ENCODE measurements at regions of chr3 and their contacts with region 1.

Region 1: DNA sequence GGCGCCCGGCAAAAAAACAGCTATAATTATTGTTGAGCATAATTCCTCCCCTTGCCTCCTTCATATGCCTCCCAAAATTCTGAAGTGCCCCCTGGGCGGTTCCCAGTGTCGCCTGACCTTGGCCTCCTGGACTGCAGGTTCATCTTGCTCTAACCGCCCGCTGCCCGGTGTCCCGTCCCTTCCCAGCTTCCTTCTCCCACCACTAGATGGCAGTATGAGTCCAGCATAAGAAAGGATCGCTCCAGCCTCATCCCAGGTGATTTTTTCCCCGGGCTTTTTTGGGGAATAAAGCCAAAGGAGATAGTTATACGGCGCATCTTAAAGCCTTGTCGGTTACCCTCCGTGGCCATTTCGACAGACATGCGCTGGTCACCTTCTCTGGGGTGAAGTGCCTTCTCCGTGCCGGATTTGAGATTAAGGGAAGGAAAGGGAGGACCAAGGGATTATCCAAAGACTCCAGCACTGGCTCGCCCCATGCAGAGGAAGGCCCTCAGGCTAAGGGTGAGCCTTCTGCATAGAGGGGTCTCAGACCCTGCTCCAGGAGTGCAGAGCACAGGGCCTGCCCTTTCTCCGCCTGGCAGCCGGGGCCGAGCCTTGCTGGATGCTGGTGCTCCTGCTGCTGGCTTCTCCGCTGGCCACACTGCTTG is 45.8 kb upstream of the TRA2B start:
- DNase-seq: peak; percentile 62
- ATAC-seq: peak; percentile 93
- H3K4me3 ChIP-seq: no peak overlapping the region
- H3K27ac ChIP-seq: no peak overlapping the region
- H3K4me1 ChIP-seq: 0 out of 2 replicates have a peak, but pooled peaks cover 2% of the 10 kb centered on the region
- H3K27me3 ChIP-seq: no peaks in the 10 kb centered on the region; the same call in 1 of the 2 replicates
- CTCF ChIP-seq: peak; percentile 91
- POLR2A ChIP-seq: no peak
- RAD21 ChIP-seq: peak; percentile 97

Region 2: DNA sequence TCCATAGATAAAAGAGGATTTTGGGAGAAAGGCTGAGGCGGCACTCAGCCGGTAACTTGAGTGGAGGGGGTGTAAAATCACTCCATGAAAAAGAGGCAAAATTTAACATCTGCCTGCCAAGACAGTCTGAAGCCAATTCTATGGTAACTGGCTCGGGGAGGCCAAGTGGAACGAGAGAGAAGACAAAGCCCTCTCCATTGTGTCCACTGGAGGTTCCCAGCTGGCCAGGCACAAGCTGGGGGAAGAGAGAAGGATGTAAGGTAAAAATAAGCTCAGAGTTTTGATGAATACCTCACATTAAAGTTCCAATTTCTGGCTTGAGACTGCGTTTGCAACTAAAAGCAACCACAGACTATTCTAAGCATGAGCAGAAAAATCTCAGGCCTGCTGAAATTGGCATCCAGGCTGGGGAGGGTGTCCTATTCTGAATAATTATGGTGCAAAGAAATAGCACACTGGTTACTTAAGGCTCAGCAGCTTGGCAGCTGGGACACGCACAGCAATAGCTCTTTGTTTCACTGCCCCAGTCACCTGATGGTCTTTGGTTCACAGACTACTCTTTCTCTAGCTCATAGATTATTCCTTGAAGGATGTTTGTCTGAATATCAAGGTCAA is 1555.0 kb before region 1 on chr3:
- CTCF ChIA-PET with region 1: no interaction called
- POLR2A ChIA-PET with region 1: no interaction called
- dilution Hi-C with region 1: no loop called
- in situ Hi-C with region 1: no loop called
- intact Hi-C with region 1: no loop called
- DNase-seq: no peak
- ATAC-seq: no peak
- H3K4me3 ChIP-seq: no peak overlapping the region
- H3K27ac ChIP-seq: no peak overlapping the region
- H3K4me1 ChIP-seq: no peaks in the 10 kb centered on the region
- H3K27me3 ChIP-seq: peaks cover 16% of the 10 kb centered on the region
- CTCF ChIP-seq: no peak
- POLR2A ChIP-seq: no peak
- RAD21 ChIP-seq: no peak

Region 3: DNA sequence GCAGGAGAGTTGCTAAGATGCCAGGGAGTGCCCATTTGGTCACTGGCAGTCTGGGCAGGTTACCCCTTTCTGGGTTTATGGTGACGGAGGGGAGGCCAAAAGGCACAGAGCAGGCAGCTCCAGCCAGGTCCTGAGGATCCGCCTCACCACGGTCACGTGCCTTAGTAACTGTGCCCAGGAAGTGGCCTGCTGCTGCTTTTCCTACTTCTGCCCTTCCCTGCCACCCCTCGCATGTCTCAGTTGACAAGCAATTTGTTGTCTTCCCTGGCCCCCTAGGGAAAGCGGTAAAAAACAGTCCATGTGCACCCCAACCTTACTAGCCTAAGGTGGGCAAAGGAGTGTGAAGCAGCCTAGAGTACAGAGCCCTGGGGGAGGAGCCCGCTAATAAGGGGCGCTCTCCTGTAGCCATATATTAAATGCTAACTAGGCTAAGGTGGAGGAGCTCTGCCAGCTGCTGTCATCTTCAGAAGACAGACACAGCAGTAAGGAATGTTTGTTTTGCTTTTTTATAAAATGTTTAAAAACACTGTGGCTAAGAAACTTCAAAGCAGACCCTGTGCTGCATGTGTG is 422.2 kb before region 1 on chr3:
- CTCF ChIA-PET with region 1: no interaction called
- POLR2A ChIA-PET with region 1: no interaction called
- dilution Hi-C with region 1: no loop called
- in situ Hi-C with region 1: no loop called
- intact Hi-C with region 1: no loop called
- DNase-seq: no peak
- ATAC-seq: no peak
- H3K4me3 ChIP-seq: no peak overlapping the region
- H3K27ac ChIP-seq: no peak overlapping the region
- H3K4me1 ChIP-seq: no peaks in the 10 kb centered on the region
- H3K27me3 ChIP-seq: peaks cover 12% of the 10 kb centered on the region
- CTCF ChIP-seq: no peak
- POLR2A ChIP-seq: no peak
- RAD21 ChIP-seq: no peak

Region 4: DNA sequence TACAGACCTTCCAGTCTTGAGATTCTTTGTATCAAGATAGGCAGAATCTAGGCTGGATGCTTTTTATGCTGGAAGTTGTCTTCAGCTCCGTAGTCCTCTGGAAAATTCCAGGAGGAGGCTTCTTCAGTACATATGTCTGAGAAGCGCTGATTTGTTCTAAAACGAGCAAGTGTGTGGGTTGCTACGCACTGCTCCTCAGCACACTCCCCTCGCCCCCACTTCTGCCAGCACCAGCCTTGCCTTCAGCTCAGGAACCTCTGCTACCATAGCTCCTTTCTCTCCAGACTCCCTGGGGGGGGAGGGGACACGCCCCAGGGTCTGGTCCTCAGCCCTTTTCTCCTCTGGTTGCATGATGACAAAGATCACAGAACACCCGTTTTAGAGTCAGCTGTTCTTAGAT is 29.7 kb after region 1 on chr3:
- CTCF ChIA-PET with region 1: no interaction called
- POLR2A ChIA-PET with region 1: no interaction called
- dilution Hi-C with region 1: no loop called
- in situ Hi-C with region 1: no loop called
- intact Hi-C with region 1: no loop called
- DNase-seq: no peak
- ATAC-seq: no peak
- H3K4me3 ChIP-seq: no peak overlapping the region
- H3K27ac ChIP-seq: no peak overlapping the region
- H3K4me1 ChIP-seq: no peaks in the 10 kb centered on the region
- H3K27me3 ChIP-seq: peaks cover 6% of the 10 kb centered on the region; the same call in 1 of the 2 replicates
- CTCF ChIP-seq: no peak
- POLR2A ChIP-seq: no peak
- RAD21 ChIP-seq: no peak

Region 5: GRCh38 chr3:186057594-186057993 is 74.0 kb after region 1 on chr3:
- CTCF ChIA-PET with region 1: no interaction called
- POLR2A ChIA-PET with region 1: no interaction called
- dilution Hi-C with region 1: no loop called
- in situ Hi-C with region 1: no loop called
- intact Hi-C with region 1: loop called (anchors 5 kb)
- DNase-seq: peak; percentile 97
- ATAC-seq: peak; percentile 92
- H3K4me3 ChIP-seq: no peak overlapping the region
- H3K27ac ChIP-seq: peak overlapping the region; percentile 21; the same call in 1 of the 2 replicates
- H3K4me1 ChIP-seq: peaks cover 8% of the 10 kb centered on the region; the same call in 1 of the 2 replicates
- H3K27me3 ChIP-seq: no peaks in the 10 kb centered on the region
- CTCF ChIP-seq: no peak
- POLR2A ChIP-seq: no peak
- RAD21 ChIP-seq: peak; percentile 16; the same call in 1 of the 2 replicates

Region 6: DNA sequence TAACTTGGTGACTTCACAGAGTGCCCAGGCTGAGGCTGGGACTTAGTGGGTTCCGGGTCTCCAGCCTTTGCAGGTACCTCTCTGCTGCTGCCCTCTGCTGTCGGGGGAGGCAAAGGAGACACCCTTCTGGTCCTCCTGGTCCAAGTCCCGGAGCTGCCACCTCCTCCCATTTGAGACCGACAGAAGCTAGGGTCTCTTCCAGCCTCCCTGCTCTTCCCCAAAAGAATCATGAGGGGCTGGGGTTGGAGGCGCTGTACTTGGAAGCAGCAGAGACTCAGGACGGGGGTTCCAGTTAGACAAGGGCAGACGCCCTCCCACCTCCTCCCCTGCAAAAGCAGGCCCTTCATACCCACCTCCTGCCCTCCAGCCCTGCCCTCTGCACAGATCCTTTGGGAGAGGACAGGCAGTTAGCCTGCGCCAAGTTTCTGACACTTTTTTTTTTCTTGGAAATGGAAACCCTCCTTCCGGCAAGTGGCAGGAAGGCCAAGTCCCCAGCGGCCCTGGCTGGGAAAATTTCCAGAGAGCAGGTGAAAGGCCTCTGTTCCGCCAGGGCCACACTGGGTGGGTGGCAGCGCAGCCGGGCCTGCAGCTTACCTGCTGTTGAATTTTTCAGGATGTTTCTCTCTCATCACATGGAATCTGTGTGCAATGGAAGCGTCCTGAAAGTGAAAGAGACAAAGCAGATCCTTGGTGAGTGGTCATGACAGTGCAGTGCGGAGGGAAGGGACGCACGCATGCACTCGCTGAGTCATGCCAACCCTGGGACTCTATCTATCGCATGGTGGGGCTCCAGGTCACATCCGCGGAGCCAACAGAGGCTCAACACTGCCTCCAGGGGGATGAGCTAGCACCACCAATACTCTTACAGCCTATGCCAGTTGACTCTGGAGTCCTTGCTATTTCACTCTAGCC is 258.5 kb after region 1 on chr3:
- CTCF ChIA-PET with region 1: interaction called, 3 read pairs
- POLR2A ChIA-PET with region 1: no interaction called
- dilution Hi-C with region 1: no loop called
- in situ Hi-C with region 1: no loop called
- intact Hi-C with region 1: loop called (anchors 1 kb)
- DNase-seq: peak; percentile 82
- ATAC-seq: peak; percentile 96
- H3K4me3 ChIP-seq: no peak overlapping the region
- H3K27ac ChIP-seq: no peak overlapping the region
- H3K4me1 ChIP-seq: 0 out of 2 replicates have a peak, but pooled peaks cover 2% of the 10 kb centered on the region
- H3K27me3 ChIP-seq: peaks cover 2% of the 10 kb centered on the region; the same call in 1 of the 2 replicates
- CTCF ChIP-seq: peak; percentile 61
- POLR2A ChIP-seq: no peak
- RAD21 ChIP-seq: peak; percentile 73

Region 7: DNA sequence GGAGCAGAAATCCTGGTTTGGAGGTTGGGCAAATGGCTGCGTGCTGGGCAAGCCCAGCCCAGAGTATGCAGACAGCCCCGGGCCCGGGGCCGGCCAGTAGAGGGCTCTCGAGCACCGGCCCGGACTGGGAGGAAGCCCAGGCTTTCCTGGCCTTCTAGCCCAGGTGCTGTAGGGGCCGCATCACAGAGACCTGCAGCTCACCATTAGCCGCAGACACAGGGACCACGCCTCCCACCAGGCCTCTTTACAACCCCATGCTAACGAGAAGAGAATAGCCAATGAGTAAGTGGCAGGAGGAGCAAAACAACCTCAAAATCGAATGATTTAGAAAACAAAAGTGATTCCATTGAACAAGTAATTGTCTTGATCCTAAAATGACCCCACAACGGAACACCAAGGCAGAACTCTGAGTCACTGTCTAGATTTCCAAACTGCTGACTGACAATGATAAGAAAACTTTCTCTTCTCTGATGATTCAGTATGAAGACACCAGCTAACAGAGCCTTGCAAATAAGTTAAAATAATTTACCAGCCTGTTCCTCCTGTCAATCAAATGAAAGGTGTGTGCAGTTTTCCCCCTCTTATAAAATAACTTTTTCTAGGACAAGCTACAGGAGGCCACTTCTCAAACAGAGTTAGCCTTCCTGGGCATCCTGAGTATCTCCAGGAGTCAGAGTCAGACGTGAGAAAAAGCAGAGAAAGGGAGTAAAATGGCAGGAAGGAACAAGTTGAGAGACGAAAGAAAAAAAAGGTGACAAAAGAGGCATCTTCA is 276.2 kb after region 1 on chr3:
- CTCF ChIA-PET with region 1: no interaction called
- POLR2A ChIA-PET with region 1: no interaction called
- dilution Hi-C with region 1: no loop called
- in situ Hi-C with region 1: no loop called
- intact Hi-C with region 1: loop called (anchors 1 kb)
- DNase-seq: peak; percentile 73
- ATAC-seq: peak; percentile 99
- H3K4me3 ChIP-seq: peak overlapping the region; percentile 6; the same call in 1 of the 2 replicates
- H3K27ac ChIP-seq: no peak overlapping the region
- H3K4me1 ChIP-seq: no peaks in the 10 kb centered on the region
- H3K27me3 ChIP-seq: peaks cover 14% of the 10 kb centered on the region
- CTCF ChIP-seq: peak; percentile 79
- POLR2A ChIP-seq: no peak
- RAD21 ChIP-seq: peak; percentile 74

Region 8: GRCh38 chr3:186277268-186277909 is 293.8 kb after region 1 on chr3:
- CTCF ChIA-PET with region 1: interaction called, 10 read pairs
- POLR2A ChIA-PET with region 1: no interaction called
- dilution Hi-C with region 1: no loop called
- in situ Hi-C with region 1: loop called (anchors 5 kb)
- intact Hi-C with region 1: loop called (anchors 1 kb)
- DNase-seq: peak; percentile 75
- ATAC-seq: peak; percentile 74
- H3K4me3 ChIP-seq: no peak overlapping the region
- H3K27ac ChIP-seq: no peak overlapping the region
- H3K4me1 ChIP-seq: no peaks in the 10 kb centered on the region
- H3K27me3 ChIP-seq: peaks cover 3% of the 10 kb centered on the region; the same call in 1 of the 2 replicates
- CTCF ChIP-seq: peak; percentile 76
- POLR2A ChIP-seq: no peak
- RAD21 ChIP-seq: peak; percentile 88

Measured in IMR-90 (cell line).